ENCODE measurements at regions of chr21 and their contacts with region 1.

Region 1: DNA sequence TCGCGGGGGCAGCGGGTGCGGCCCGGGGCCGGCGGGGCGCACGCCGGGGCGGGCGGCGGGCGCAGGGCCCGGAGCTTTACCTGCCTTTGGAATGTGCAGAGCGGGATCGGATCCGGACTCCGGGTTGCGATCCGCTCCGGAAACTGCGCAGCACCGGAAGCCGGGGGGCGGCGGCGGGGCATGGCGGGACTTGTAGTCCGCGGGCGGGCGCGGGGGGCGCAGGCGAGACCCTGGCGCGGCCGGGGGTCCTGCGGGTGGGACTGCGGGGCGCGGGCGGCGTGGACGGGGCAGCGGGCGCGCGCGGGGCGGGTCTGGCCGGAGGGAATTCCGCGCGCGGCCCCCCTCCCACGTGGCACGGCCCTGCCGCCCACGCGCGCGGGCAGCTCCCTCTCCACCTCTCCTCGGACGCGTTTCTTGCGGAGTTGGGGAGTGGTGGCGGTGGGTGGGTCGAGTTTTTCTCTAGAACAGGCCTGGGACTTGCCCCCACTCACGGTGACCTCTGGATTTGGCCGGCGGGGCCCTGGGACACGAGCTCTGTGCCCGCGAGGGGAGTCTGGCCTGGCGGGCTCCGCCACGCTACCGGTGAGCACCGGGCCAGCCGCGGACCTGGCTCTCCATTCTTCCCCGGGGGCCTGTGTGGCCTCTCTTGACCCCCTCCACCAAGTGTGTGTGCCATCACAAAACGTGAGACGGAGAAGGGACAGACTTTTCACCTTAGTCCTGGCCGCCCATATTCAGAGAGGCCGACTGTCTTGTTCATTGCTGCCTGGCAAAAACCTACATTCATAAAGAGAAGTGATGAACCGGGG is at the start of gene PRDM15:
- DNase-seq: peak; percentile 85 to 95
- H3K4me3 ChIP-seq: peak within 1 kb of the TSS; percentile 71 to 87 (median 77)
- H3K27ac ChIP-seq: peak within 1 kb of the TSS; percentile 81 to 96 (median 91)
- H3K4me1 ChIP-seq: peaks cover 0 to 32% (median 21%) of the 10 kb centered on the region in 4 donors
- H3K27me3 ChIP-seq: no peaks in the 10 kb centered on the region
- CTCF ChIP-seq: no peak
- EP300 ChIP-seq: no peak
- POLR2A ChIP-seq: no peak
- total RNA-seq, gene PRDM15: 2.6 to 44.6 (median 10.0) TPM

Region 2: DNA sequence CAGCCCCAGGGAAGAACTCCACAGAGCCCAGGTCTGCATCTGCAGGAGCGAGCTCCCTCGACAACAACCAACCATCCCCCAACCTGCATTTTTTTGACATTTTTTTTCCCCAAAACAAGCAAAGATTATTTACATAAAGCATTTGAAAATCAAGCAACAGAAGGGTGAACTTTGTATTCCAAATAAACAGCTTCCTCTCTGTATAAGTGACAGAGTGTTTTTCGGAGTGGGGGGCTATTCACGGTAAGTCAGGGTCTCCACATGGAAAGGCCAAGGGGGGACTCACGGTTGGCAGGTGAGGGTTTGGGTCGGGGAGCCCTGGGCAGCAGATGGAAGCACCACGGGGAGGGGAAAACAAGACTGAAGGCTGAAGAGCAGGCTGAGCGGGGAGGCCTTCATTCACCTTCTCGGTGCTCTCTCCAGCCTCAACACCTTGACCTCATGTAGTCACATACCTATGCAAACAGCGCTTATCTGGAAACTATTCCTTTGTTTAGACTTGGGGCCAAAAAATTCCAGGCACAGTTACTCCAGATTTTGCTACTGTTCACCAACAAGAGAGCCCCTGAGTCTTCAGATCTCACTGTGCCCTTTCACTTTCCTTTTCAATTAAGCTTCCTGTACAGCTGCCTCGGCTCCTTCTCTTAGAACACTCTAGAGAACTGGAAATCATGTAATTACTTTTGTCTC is 46.9 kb after region 1 on chr21:
- intact Hi-C with region 1: loop called (anchors 10 kb)
- DNase-seq: peak; percentile 44 to 86
- H3K4me3 ChIP-seq: peak overlapping the region; percentile 31 to 38 (median 34)
- H3K27ac ChIP-seq: peak overlapping the region; percentile 26 to 88 (median 83)
- H3K4me1 ChIP-seq: peaks cover 17 to 64% (median 53%) of the 10 kb centered on the region in 4 donors
- H3K27me3 ChIP-seq: peaks cover 0 to 10% (median 0%) of the 10 kb centered on the region in 3 donors
- CTCF ChIP-seq: no peak
- EP300 ChIP-seq: no peak
- POLR2A ChIP-seq: no peak

Region 3: DNA sequence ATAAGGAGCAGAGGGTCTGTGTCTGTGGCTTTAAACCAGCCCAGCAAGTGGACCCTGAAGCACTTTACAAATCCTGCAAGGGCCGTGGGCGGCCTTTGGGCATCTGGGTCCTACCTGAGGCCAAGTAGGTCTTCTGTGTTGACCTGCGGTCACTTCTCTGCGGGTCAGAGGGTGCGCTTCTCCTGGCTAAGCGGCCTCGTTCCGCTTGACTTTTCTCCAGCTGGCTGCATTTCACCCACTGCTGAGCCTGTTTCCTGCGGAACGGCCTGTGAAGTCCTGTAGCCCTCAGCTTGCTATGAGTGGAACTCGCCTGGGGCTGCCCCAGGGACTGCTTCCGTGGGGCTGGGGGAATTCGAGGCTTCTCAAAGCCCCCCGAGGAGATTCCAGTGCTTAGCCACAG is 677.6 kb after region 1 on chr21:
- intact Hi-C with region 1: no loop called
- DNase-seq: no peak
- H3K4me3 ChIP-seq: no peak overlapping the region
- H3K27ac ChIP-seq: no peak overlapping the region
- H3K4me1 ChIP-seq: peaks cover 0 to 12% (median 4%) of the 10 kb centered on the region in 4 donors
- H3K27me3 ChIP-seq: no peaks in the 10 kb centered on the region
- CTCF ChIP-seq: no peak
- EP300 ChIP-seq: no peak
- POLR2A ChIP-seq: no peak

Measured in stomach (tissue), 19 donors.